Caco-2 (cell line): ENCODE measurements at regions of chr1 and their contacts with region 1.

Region 1: DNA sequence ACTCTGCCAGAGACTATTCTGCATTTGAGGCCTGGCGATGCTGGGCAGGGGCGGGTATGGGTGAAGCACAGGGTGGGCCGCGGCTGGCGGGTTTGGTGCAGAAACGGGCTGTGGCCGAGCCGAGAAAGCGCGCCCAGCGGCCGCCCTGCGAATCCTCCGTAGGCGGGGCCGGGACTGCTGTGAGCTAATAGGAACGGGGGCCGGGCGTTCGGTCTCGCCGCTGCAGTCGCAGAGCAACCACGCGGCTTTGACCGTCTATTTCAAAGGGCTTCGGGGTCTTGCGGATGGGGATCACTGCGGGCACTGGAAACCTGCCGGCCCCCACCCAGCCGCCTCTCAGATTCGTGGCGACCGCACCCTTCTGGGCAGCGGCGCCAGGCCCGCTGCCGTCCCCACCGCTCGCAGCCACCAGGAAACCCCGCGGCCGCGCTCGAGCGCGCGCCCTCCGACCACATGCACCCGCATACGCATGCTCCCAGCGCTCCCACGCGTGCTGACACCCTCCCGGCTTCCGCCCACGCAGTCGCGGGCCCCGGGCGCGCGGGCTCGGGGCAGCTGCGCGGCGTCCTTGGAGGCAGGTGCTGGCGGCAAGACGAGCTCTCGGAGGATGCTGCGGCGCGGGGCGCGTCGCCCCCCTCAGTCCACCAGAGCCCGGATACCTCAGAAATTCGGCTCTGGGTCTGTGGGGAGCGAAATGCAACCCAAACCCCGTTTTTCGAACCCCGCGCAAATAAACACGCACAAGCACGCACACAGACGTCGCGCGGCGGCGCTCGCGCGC is 32.6 kb downstream of the DNTTIP2 start:
- DNase-seq: peak; percentile 82 to 85
- H3K4me3 ChIP-seq: peak overlapping the region; percentile 84
- H3K4me3 Mint-ChIP-seq: peak overlapping the region; percentile 81
- H3K27ac Mint-ChIP-seq: peak overlapping the region; percentile 88
- H3K4me1 ChIP-seq: peaks cover 6% of the 10 kb centered on the region
- H3K4me1 Mint-ChIP-seq: no peaks in the 10 kb centered on the region
- H3K27me3 ChIP-seq: no peaks in the 10 kb centered on the region
- H3K27me3 Mint-ChIP-seq: no peaks in the 10 kb centered on the region
- CTCF ChIP-seq: peak in 1 of 2 experiments; percentile 35

Region 2: DNA sequence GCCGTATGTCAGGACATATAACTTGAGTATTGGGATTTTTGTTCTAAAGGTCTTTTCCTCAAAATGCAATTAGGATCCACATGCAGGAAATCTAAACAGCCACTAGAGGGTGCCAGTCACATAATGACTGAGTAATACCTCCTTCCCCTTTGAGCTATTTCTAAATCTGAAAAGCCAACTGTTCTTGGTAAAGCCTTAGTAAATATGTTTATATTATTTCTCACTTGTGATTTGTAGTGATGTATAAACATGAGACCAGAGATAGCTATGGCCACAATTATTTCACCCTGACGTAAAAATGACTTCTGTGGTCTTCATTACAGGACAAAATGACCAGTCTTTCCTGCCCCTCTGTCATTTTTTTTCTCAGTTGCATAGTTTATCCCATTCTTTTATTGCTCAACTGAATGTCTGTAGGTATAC is 541.7 kb before region 1 on chr1:
- CTCF ChIA-PET with region 1: interaction called, 6 read pairs
- POLR2A ChIA-PET with region 1: no interaction called
- intact Hi-C with region 1: loop called (anchors 10 kb)
- DNase-seq: peak; percentile 43 to 52
- H3K4me3 ChIP-seq: no peak overlapping the region
- H3K4me3 Mint-ChIP-seq: no peak overlapping the region
- H3K27ac Mint-ChIP-seq: no peak overlapping the region
- H3K4me1 ChIP-seq: no peaks in the 10 kb centered on the region
- H3K4me1 Mint-ChIP-seq: peaks cover 6% of the 10 kb centered on the region
- H3K27me3 ChIP-seq: no peaks in the 10 kb centered on the region
- H3K27me3 Mint-ChIP-seq: peaks cover 4% of the 10 kb centered on the region
- CTCF ChIP-seq: peak; percentile 47 to 58

Region 3: GRCh38 chr1:93616996-93617669 is 229.3 kb before region 1 on chr1:
- CTCF ChIA-PET with region 1: no interaction called
- POLR2A ChIA-PET with region 1: interaction called, 12 read pairs
- intact Hi-C with region 1: no loop called
- DNase-seq: no peak
- H3K4me3 ChIP-seq: no peak overlapping the region
- H3K4me3 Mint-ChIP-seq: peak overlapping the region; percentile 35
- H3K27ac Mint-ChIP-seq: peak overlapping the region; percentile 92
- H3K4me1 ChIP-seq: peaks cover 56% of the 10 kb centered on the region
- H3K4me1 Mint-ChIP-seq: peaks cover 47% of the 10 kb centered on the region
- H3K27me3 ChIP-seq: no peaks in the 10 kb centered on the region
- H3K27me3 Mint-ChIP-seq: no peaks in the 10 kb centered on the region
- CTCF ChIP-seq: no peak

Region 4: GRCh38 chr1:93814059-93814794 is 32.2 kb before region 1 on chr1:
- CTCF ChIA-PET with region 1: interaction called, 22 read pairs
- POLR2A ChIA-PET with region 1: no interaction called
- intact Hi-C with region 1: loop called (anchors 1 kb)
- DNase-seq: peak; percentile 59 to 71
- H3K4me3 ChIP-seq: no peak overlapping the region
- H3K4me3 Mint-ChIP-seq: no peak overlapping the region
- H3K27ac Mint-ChIP-seq: no peak overlapping the region
- H3K4me1 ChIP-seq: peaks cover 21% of the 10 kb centered on the region
- H3K4me1 Mint-ChIP-seq: peaks cover 25% of the 10 kb centered on the region
- H3K27me3 ChIP-seq: no peaks in the 10 kb centered on the region
- H3K27me3 Mint-ChIP-seq: no peaks in the 10 kb centered on the region
- CTCF ChIP-seq: peak; percentile 79 to 83

Region 5: DNA sequence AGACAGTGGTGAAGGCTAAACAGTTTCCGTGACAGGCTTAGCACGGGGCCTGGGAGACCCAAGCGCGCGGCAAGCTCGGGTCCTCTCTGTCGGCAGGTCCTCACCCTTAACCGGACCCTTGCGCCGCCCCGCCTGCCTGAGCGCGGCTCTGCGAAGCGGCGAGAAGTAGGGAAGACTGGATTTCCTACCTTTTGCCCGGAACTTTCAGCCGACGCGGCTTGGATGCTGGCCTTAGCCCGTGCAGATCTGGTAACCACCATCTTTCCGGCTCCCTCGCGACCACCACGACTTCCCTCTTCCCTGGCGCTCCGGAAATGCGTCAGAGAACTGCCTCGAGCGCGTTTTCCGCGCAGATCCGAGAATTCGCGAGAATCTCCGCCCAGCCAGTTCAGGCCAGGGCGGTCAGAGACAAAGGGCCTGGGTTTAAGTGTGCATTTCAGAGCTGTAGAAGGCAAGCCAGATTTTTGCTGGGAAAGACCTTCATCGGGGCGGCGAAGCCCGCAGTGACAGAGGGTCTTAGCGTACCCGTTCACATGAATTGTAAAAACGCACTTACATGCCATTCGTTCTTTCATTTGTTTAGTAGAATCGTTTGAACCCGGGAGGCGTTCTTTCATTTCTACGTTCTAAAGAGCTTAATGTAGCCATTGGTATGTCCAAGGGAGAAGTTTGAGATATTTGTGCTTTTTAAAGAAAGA is 32.6 kb after region 1 on chr1 and contains the start of gene DNTTIP2:
- CTCF ChIA-PET with region 1: interaction called, 3 read pairs
- POLR2A ChIA-PET with region 1: interaction called, 8 read pairs
- intact Hi-C with region 1: loop called (anchors 1 kb)
- DNase-seq: peak; percentile 85 to 87
- H3K4me3 ChIP-seq: peak within 1 kb of the TSS; percentile 78
- H3K4me3 Mint-ChIP-seq: peak within 1 kb of the TSS; percentile 90
- H3K27ac Mint-ChIP-seq: peak within 1 kb of the TSS; percentile 99
- H3K4me1 ChIP-seq: no peaks in the 10 kb centered on the region
- H3K4me1 Mint-ChIP-seq: peaks cover 17% of the 10 kb centered on the region
- H3K27me3 ChIP-seq: no peaks in the 10 kb centered on the region
- H3K27me3 Mint-ChIP-seq: no peaks in the 10 kb centered on the region
- CTCF ChIP-seq: no peak
- total RNA-seq, gene DNTTIP2: 39.0 and 39.9 TPM in 2 replicates

Region 6: GRCh38 chr1:93899543-93900207 is 53.3 kb after region 1 on chr1:
- CTCF ChIA-PET with region 1: no interaction called
- POLR2A ChIA-PET with region 1: no interaction called
- intact Hi-C with region 1: no loop called
- DNase-seq: no peak
- H3K4me3 ChIP-seq: no peak overlapping the region
- H3K4me3 Mint-ChIP-seq: no peak overlapping the region
- H3K27ac Mint-ChIP-seq: no peak overlapping the region
- H3K4me1 ChIP-seq: no peaks in the 10 kb centered on the region
- H3K4me1 Mint-ChIP-seq: no peaks in the 10 kb centered on the region
- H3K27me3 ChIP-seq: no peaks in the 10 kb centered on the region
- H3K27me3 Mint-ChIP-seq: no peaks in the 10 kb centered on the region
- CTCF ChIP-seq: no peak

Region 7: GRCh38 chr1:93925206-93925605 is 78.8 kb after region 1 on chr1:
- CTCF ChIA-PET with region 1: no interaction called
- POLR2A ChIA-PET with region 1: no interaction called
- intact Hi-C with region 1: no loop called
- DNase-seq: no peak
- H3K4me3 ChIP-seq: no peak overlapping the region
- H3K4me3 Mint-ChIP-seq: no peak overlapping the region
- H3K27ac Mint-ChIP-seq: no peak overlapping the region
- H3K4me1 ChIP-seq: no peaks in the 10 kb centered on the region
- H3K4me1 Mint-ChIP-seq: no peaks in the 10 kb centered on the region
- H3K27me3 ChIP-seq: no peaks in the 10 kb centered on the region
- H3K27me3 Mint-ChIP-seq: peaks cover 2% of the 10 kb centered on the region
- CTCF ChIP-seq: no peak